Activated CD8-positive, alpha-beta T cell treated with anti-CD3 and anti-CD28 coated beads, Interleukin-2, amount 10 ng/mL, durations not matched to agents 7 days and 5 days (primary cell): ENCODE measurements at regions of chr1 and their contacts with region 1.

Region 1: DNA sequence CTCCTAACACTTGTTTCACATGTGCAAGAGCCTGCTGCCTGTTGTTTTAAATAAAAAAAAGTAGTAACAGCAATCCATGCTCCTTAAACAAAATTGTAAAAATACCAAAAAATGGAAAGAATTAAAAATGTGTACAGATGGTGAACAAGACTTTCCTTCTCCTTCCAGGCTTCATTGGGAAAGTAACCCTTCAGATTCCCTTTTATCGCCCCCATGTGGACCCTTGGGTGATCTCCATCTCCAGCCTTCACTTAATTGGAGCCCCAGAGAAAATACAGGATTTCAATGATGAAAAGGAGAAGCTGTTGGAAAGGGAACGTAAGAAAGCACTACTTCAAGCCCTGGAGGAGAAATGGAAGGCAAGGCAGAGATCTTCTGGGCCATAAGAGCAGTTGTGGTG is 14.2 kb downstream of the VPS13D start:
- DNase-seq: peak; percentile 27
- ATAC-seq: no peak
- H3K4me3 Mint-ChIP-seq: no peak overlapping the region
- H3K27ac Mint-ChIP-seq: no peak overlapping the region
- H3K4me1 Mint-ChIP-seq: no peaks in the 10 kb centered on the region
- H3K27me3 Mint-ChIP-seq: no peaks in the 10 kb centered on the region

Region 2: GRCh38 chr1:12208764-12209494 is 35.1 kb before region 1 on chr1:
- CTCF ChIA-PET with region 1: interaction called, 14 read pairs
- POLR2A ChIA-PET with region 1: no interaction called
- DNase-seq: peak; percentile 88
- ATAC-seq: peak; percentile 76
- H3K4me3 Mint-ChIP-seq: no peak overlapping the region
- H3K27ac Mint-ChIP-seq: peak overlapping the region; percentile 78
- H3K4me1 Mint-ChIP-seq: peaks cover 63% of the 10 kb centered on the region
- H3K27me3 Mint-ChIP-seq: peaks cover 2% of the 10 kb centered on the region

Region 3: GRCh38 chr1:12219800-12220199 is 24.3 kb before region 1 on chr1:
- CTCF ChIA-PET with region 1: no interaction called
- POLR2A ChIA-PET with region 1: no interaction called
- DNase-seq: no peak
- ATAC-seq: no peak
- H3K4me3 Mint-ChIP-seq: no peak overlapping the region
- H3K27ac Mint-ChIP-seq: no peak overlapping the region
- H3K4me1 Mint-ChIP-seq: no peaks in the 10 kb centered on the region
- H3K27me3 Mint-ChIP-seq: peaks cover 8% of the 10 kb centered on the region

Region 4: GRCh38 chr1:12229835-12230548 is 14.1 kb before region 1 on chr1 and contains the start of gene VPS13D:
- CTCF ChIA-PET with region 1: interaction called, 18 read pairs
- POLR2A ChIA-PET with region 1: interaction called, 3 read pairs
- DNase-seq: peak; percentile 88
- ATAC-seq: peak; percentile 98
- H3K4me3 Mint-ChIP-seq: peak within 1 kb of the TSS; percentile 84
- H3K27ac Mint-ChIP-seq: peak within 1 kb of the TSS; percentile 61
- H3K4me1 Mint-ChIP-seq: peaks cover 14% of the 10 kb centered on the region
- H3K27me3 Mint-ChIP-seq: peaks cover 3% of the 10 kb centered on the region
- total RNA-seq, gene VPS13D: 32.5 to 39.9 TPM